ENCODE measurements at regions of chr5 and their contacts with region 1.

Region 1: DNA sequence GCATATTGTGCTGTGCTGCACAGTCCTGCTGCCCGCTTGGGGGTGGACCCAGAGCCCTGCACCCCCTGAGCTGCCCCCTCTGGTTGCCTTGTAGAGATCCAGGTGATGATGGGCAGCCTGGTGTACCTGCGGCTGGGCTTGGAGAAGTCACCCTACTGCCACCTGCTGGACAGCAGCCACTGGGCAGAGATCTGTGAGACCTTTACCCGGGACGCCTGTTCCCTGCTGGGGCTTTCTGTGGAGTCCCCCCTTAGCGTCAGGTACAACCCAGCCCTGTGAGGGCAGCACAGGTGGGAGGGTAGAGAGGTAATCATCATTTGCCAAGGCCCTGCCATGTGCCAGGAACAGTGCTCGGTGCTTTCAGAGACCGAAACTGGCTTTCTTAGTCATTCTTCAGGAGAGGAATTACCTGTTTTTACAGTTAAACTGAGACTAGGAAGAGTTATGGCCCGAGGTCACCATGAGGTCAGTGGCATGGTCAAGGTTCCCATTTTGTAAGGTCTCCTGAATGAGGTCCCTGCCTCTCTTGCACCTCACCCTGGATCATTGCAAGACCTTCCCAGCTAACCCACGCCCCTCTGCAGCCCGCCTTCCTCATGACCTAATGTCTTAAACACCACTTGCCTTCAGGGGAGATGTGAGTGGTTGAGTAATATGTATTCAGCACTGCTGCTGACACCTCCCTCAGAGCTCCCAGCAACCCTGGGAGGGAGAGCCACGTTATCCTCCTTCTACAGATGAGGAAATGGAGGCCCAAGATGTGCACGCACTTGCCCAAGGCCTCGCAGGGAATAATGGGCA is 7.5 kb downstream of the NHP2 start:
- DNase-seq: peak; percentile 65 to 86 (median 72)
- ATAC-seq: peak; percentile 92
- H3K4me3 ChIP-seq: no peak overlapping the region
- H3K4me3 Mint-ChIP-seq: no peak overlapping the region
- H3K27ac ChIP-seq: no peak overlapping the region
- H3K27ac Mint-ChIP-seq: peak overlapping the region; percentile 36
- H3K4me1 ChIP-seq: peaks cover 15% of the 10 kb centered on the region
- H3K4me1 Mint-ChIP-seq: no peaks in the 10 kb centered on the region
- H3K27me3 ChIP-seq: no peaks in the 10 kb centered on the region
- H3K27me3 Mint-ChIP-seq: no peaks in the 10 kb centered on the region
- CTCF ChIP-seq: peak; percentile 78

Region 2: DNA sequence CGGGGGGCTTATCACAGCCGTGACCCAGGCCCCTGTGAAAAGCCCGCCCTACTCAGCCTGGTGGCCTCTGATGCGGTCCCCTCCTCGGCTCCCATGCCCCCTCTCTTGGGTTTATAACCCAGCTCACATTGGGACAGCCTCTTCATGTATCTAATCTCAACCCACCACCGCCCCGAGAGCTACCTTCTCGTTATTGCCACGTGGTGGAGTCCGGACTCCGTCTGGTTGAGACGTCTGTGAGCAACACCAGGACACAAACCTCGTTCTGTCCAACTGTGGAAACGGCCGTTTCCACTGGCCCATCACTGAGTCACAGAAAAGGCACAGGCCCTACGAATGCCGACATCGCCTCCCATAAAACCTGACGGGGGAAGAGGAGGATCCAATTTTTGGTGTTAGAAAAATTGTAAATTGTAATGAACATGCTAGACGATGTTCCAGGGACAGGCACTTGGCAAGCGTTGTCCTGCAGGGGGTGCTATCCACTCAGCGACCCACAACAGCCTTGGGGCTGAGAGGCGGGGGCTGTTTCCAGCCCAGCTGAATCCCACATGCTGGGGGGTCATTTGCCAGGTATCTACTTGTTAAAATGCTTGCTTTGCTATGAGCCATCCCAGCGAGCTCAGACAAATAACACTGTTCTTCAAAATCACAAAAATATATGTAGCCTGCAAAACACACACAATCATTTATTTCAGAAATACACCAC is 70.2 kb before region 1 on chr5:
- CTCF ChIA-PET with region 1: interaction called, 14 read pairs
- POLR2A ChIA-PET with region 1: interaction called, 5 read pairs
- intact Hi-C with region 1: loop called (anchors 1 kb)
- DNase-seq: peak; percentile 72 to 89 (median 77)
- ATAC-seq: peak; percentile 93
- H3K4me3 ChIP-seq: no peak overlapping the region
- H3K4me3 Mint-ChIP-seq: peak overlapping the region; percentile 48
- H3K27ac ChIP-seq: no peak overlapping the region
- H3K27ac Mint-ChIP-seq: no peak overlapping the region
- H3K4me1 ChIP-seq: peaks cover 6% of the 10 kb centered on the region
- H3K4me1 Mint-ChIP-seq: peaks cover 6% of the 10 kb centered on the region
- H3K27me3 ChIP-seq: peaks cover 0 to 4% of the 10 kb centered on the region in 2 experiments
- H3K27me3 Mint-ChIP-seq: peaks cover 12% of the 10 kb centered on the region
- CTCF ChIP-seq: peak; percentile 99

Region 3: DNA sequence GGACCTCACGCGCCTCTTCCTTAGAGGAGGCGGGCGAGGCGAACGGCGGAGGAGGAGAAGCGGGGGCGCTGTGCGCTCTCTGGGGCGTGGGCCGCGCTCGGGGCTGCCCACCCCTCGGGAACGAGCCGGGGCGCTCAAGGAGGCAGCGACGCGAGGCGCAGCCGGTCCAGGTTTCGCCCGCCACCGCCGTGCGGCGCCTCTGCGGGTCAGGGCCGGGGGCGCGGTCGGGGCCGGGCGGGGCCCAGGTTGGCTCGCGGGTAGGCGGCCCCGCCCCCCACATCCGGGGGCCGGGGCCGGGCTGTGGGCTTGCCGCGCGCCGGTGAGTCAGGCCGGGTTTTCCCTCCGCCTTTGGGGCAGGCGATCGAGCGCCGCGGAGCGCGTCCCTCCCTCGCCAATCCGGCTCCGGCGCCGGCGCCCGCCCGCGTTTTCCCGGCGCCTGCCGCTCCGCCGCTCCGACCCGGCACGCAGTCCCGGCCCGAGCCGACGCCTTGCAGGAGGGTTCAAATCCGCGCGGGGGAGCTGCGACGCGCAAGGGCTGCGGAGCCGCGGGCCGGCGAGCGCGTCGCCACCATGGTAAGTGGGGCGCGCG is 32.9 kb before region 1 on chr5 and contains the start of gene N4BP3:
- CTCF ChIA-PET with region 1: no interaction called
- POLR2A ChIA-PET with region 1: interaction called, 7 read pairs
- intact Hi-C with region 1: loop called in 1 of 2 experiments (anchors 5 kb)
- DNase-seq: peak; percentile 55 to 93 (median 75)
- ATAC-seq: peak; percentile 69
- H3K4me3 ChIP-seq: peak within 1 kb of the TSS; percentile 55
- H3K4me3 Mint-ChIP-seq: peak within 1 kb of the TSS; percentile 95
- H3K27ac ChIP-seq: no peak within 1 kb of the TSS
- H3K27ac Mint-ChIP-seq: peak within 1 kb of the TSS; percentile 71
- H3K4me1 ChIP-seq: peaks cover 51% of the 10 kb centered on the region
- H3K4me1 Mint-ChIP-seq: peaks cover 40% of the 10 kb centered on the region
- H3K27me3 ChIP-seq: peaks cover 0 to 7% of the 10 kb centered on the region in 2 experiments
- H3K27me3 Mint-ChIP-seq: no peaks in the 10 kb centered on the region
- CTCF ChIP-seq: no peak
- total RNA-seq, gene N4BP3: 3.8 to 4.3 TPM

Region 4: DNA sequence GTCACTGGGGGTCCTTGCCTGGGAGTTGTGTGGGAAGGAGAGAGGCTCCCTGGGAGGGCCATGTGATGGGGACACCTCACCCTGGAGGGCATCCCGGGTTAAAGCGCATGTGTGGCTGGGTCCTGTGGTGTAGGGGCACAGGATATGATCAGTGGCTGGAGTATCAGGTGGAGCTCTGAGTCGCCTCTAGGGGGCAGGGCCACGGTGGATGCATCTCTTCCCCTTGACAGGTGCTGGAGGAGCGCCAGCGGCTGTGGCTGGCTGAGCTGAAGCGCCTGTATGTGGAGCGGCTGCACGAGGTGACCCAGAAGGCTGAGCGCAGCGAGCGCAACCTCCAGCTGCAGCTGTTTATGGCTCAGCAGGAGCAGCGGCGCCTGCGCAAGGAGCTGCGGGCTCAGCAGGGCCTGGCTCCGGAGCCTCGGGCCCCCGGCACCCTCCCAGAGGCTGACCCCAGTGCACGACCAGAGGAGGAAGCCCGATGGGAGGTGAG is 25.3 kb before region 1 on chr5:
- CTCF ChIA-PET with region 1: interaction called, 15 read pairs
- POLR2A ChIA-PET with region 1: interaction called, 8 read pairs
- intact Hi-C with region 1: loop called (anchors 1 to 2 kb)
- DNase-seq: peak; percentile 80 to 94 (median 88)
- ATAC-seq: peak; percentile 92
- H3K4me3 ChIP-seq: peak overlapping the region; percentile 40
- H3K4me3 Mint-ChIP-seq: peak overlapping the region; percentile 76
- H3K27ac ChIP-seq: no peak overlapping the region
- H3K27ac Mint-ChIP-seq: peak overlapping the region; percentile 72
- H3K4me1 ChIP-seq: peaks cover 56% of the 10 kb centered on the region
- H3K4me1 Mint-ChIP-seq: peaks cover 29% of the 10 kb centered on the region
- H3K27me3 ChIP-seq: peaks cover 0 to 2% of the 10 kb centered on the region in 2 experiments
- H3K27me3 Mint-ChIP-seq: no peaks in the 10 kb centered on the region
- CTCF ChIP-seq: peak; percentile 73

Region 5: GRCh38 chr5:178163772-178164735 is 17.8 kb after region 1 on chr5:
- CTCF ChIA-PET with region 1: no interaction called
- POLR2A ChIA-PET with region 1: no interaction called
- intact Hi-C with region 1: loop called (anchors 1 kb)
- DNase-seq: peak; percentile 82 to 97 (median 92)
- ATAC-seq: peak; percentile 100
- H3K4me3 ChIP-seq: no peak overlapping the region
- H3K4me3 Mint-ChIP-seq: no peak overlapping the region
- H3K27ac ChIP-seq: no peak overlapping the region
- H3K27ac Mint-ChIP-seq: no peak overlapping the region
- H3K4me1 ChIP-seq: peaks cover 7% of the 10 kb centered on the region
- H3K4me1 Mint-ChIP-seq: peaks cover 10% of the 10 kb centered on the region
- H3K27me3 ChIP-seq: no peaks in the 10 kb centered on the region
- H3K27me3 Mint-ChIP-seq: peaks cover 18% of the 10 kb centered on the region
- CTCF ChIP-seq: peak; percentile 92

Region 6: GRCh38 chr5:178241231-178241663 is 95.0 kb after region 1 on chr5:
- CTCF ChIA-PET with region 1: no interaction called
- POLR2A ChIA-PET with region 1: no interaction called
- intact Hi-C with region 1: no loop called
- DNase-seq: peak in 2 of 14 experiments; percentile 26 to 50
- ATAC-seq: no peak
- H3K4me3 ChIP-seq: no peak overlapping the region
- H3K4me3 Mint-ChIP-seq: peak overlapping the region; percentile 31
- H3K27ac ChIP-seq: no peak overlapping the region
- H3K27ac Mint-ChIP-seq: peak overlapping the region; percentile 74
- H3K4me1 ChIP-seq: peaks cover 53% of the 10 kb centered on the region
- H3K4me1 Mint-ChIP-seq: peaks cover 30% of the 10 kb centered on the region
- H3K27me3 ChIP-seq: no peaks in the 10 kb centered on the region
- H3K27me3 Mint-ChIP-seq: no peaks in the 10 kb centered on the region
- CTCF ChIP-seq: no peak

Measured in CD4-positive, alpha-beta T cell (primary cell).